HAP-1 (cell line): ENCODE measurements at regions of chr17 and their contacts with region 1.

Region 1: GRCh38 chr17:35312790-35313711 is 60.4 kb downstream of the SLFN11 start:
- DNase-seq: peak; percentile 54 to 59
- H3K4me3 ChIP-seq: no peak overlapping the region
- H3K4me1 ChIP-seq: no peaks in the 10 kb centered on the region
- H3K27me3 ChIP-seq: no peaks in the 10 kb centered on the region

Region 2: DNA sequence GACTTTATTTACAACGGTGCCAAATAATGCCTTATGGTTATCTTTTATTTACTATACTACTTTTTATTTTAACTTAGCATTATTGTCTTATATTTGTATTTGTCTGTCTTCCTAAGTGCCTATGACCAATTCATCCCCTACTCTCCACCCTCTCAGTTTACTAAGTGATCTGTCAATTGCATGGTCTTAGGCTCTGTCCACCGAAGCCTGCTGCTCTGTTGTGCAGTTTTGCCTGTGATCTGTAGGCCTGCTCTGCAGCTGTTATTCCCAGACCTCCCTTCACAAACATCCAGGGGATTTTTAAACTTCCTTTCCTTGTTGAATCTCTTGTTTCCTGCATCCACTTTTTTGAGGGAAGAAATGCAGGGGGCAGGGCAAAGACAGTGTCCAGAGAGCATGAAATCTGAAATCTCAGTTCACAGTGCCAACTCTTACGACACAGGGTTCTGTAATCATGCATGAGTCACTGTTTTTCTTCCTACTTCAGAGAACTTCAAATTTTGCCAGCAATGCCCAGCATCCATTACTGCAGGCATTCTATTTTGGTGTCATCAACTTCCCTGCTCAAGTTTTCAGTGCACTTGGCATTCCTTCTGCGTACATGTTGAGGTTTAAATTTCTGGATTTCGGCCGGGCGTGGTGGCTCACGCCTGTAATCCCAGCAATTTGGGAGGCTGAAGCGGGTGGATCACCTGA is 58.8 kb before region 1 on chr17:
- in situ Hi-C with region 1: loop called (anchors 10 kb)
- DNase-seq: no peak
- H3K4me3 ChIP-seq: no peak overlapping the region
- H3K4me1 ChIP-seq: peaks cover 8% of the 10 kb centered on the region
- H3K27me3 ChIP-seq: no peaks in the 10 kb centered on the region

Region 3: GRCh38 chr17:35273684-35274083 is 39.4 kb before region 1 on chr17:
- in situ Hi-C with region 1: no loop called
- DNase-seq: no peak
- H3K4me3 ChIP-seq: no peak overlapping the region
- H3K4me1 ChIP-seq: no peaks in the 10 kb centered on the region; the same call in 1 of the 2 replicates
- H3K27me3 ChIP-seq: peaks cover 7% of the 10 kb centered on the region; the same call in 1 of the 2 replicates

Region 4: DNA sequence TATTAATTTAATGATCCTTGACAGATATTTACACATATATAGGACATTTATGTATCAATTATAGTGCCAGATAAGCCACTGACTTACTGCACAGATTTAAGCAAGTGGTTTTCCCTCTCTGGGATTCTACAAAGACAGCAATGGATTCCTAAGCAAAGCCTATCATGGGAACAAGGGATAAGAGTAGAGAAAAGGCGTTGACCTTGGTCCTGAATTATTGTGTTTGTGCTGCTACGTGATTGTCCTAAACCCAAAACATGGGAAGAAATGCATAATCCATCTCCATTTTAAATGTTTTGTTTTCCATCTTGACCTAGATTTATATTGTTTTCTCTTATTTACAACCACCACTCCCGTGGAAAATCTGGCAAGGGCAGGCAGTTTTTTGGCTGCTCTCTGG is 46.3 kb after region 1 on chr17:
- in situ Hi-C with region 1: no loop called
- DNase-seq: no peak
- H3K4me3 ChIP-seq: no peak overlapping the region
- H3K4me1 ChIP-seq: no peaks in the 10 kb centered on the region
- H3K27me3 ChIP-seq: no peaks in the 10 kb centered on the region

Region 5: DNA sequence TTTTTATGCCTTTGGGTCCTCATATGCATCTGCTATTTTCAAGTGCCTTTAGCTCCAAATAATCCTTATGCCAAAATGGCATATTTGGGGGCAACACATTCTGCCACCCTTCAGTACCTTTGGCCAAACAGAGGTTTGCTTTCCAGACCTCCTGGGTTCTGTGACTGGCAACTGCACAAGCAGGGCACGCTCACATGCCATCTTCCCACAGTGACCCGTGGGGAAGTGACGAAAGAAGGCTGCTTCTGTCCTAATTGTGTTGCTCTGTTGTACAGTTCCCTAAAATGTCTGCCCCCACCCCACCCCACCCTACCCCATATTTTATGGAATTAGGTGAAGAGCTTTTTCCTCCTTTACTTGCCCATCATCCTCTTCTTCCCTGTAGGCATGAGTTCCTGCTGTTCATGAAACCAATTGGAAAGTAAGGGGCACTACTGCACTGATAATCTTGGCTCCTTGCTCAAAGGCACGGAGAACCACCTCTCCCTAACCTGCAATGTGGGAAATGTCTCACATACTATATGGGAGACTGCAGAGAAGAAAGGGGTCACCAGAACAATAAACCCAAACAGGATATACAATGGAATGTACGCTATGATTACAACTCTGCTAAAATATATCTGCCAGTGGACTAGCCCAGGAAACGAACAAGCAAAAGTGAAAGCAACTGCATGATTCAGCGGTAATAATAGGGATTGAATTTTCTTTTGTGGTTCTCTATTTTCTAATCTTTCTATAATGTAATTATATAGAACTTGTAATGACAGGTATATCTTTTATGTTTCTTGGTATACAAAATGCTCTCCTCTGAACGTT is 227.7 kb after region 1 on chr17:
- in situ Hi-C with region 1: loop called (anchors 5 kb)
- DNase-seq: no peak
- H3K4me3 ChIP-seq: no peak overlapping the region
- H3K4me1 ChIP-seq: no peaks in the 10 kb centered on the region; the same call in none of the 2 replicates
- H3K27me3 ChIP-seq: peaks cover 5% of the 10 kb centered on the region; the same call in 1 of the 2 replicates